Common myeloid progenitor, CD34-positive (primary cell): ENCODE measurements at regions of chr12 and their contacts with region 1.

Region 1: DNA sequence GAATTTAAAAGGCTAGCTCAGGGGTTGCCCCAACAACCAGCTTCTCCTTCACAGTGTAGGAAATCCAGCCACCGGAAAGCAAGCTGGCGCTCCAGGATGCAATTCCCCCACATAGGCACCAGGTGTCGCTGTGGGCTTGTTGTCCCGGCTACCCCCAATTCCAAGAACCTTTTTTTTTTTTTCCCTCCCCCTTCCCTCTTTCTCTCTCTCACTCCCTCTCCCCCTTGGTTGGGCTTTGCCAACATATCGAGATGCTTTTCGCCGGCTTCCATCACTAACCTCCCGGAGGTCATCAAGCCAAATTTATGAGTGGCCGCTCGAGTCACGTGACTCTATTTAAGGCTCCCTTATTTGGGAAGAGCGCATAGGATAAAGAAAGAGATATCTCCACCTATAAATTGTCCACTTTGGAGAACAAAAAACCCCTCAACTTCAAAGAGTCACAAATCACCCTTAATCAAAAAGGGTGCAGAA is at the start of gene HOXC5:
- DNase-seq: peak; percentile 68 to 84 (median 80)
- H3K4me3 ChIP-seq: peak within 1 kb of the TSS in 2 of 7 experiments; percentile 8 to 17
- H3K27ac ChIP-seq: no peak within 1 kb of the TSS
- H3K4me1 ChIP-seq: peaks cover 0 to 27% (median 12%) of the 10 kb centered on the region in 4 experiments
- H3K27me3 ChIP-seq: peaks cover 15 to 100% (median 71%) of the 10 kb centered on the region in 5 experiments

Region 2: DNA sequence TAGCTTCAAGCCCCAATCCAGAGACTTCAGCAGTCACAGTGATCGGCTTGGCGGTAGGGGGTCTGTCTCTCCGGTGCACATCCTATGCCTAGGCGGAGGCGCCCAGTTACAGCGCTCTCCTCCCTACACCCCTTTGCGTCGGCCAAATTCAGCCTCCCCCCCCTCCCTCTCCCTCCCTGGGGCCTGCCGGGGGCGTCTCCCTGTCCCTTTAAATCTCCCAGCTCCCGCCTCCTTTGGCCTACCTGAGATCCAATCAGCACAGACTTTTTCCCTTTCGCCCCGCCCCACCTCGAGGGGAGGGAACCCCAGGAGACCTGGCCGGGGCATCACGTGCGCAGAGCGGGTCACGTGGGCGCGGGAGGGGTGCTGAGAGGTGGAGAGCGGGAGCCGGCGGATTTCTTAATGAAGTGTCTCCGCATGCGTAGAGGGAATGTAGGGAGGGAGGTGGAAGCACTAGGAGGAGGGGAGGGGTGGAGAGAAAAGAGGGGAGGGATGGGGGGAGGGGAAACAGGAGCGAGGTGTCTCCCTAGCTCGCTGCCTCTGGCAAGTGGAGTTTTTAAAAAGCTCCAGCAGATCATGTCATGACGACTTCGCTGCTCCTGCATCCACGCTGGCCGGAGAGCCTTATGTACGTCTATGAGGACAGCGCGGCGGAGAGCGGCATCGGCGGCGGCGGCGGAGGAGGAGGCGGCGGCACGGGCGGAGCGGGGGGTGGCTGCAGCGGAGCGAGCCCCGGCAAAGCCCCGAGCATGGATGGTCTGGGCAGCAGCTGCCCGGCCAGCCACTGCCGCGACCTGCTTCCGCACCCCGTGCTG is 94.1 kb before region 1 on chr12 and contains the start of gene HOXC13:
- CTCF ChIA-PET with region 1: no interaction called
- POLR2A ChIA-PET with region 1: no interaction called
- DNase-seq: peak; percentile 43 to 65 (median 54)
- H3K4me3 ChIP-seq: no peak within 1 kb of the TSS
- H3K27ac ChIP-seq: no peak within 1 kb of the TSS
- H3K4me1 ChIP-seq: peaks cover 0 to 3% (median 0%) of the 10 kb centered on the region in 4 experiments
- H3K27me3 ChIP-seq: peaks cover 36 to 99% (median 74%) of the 10 kb centered on the region in 5 experiments

Region 3: DNA sequence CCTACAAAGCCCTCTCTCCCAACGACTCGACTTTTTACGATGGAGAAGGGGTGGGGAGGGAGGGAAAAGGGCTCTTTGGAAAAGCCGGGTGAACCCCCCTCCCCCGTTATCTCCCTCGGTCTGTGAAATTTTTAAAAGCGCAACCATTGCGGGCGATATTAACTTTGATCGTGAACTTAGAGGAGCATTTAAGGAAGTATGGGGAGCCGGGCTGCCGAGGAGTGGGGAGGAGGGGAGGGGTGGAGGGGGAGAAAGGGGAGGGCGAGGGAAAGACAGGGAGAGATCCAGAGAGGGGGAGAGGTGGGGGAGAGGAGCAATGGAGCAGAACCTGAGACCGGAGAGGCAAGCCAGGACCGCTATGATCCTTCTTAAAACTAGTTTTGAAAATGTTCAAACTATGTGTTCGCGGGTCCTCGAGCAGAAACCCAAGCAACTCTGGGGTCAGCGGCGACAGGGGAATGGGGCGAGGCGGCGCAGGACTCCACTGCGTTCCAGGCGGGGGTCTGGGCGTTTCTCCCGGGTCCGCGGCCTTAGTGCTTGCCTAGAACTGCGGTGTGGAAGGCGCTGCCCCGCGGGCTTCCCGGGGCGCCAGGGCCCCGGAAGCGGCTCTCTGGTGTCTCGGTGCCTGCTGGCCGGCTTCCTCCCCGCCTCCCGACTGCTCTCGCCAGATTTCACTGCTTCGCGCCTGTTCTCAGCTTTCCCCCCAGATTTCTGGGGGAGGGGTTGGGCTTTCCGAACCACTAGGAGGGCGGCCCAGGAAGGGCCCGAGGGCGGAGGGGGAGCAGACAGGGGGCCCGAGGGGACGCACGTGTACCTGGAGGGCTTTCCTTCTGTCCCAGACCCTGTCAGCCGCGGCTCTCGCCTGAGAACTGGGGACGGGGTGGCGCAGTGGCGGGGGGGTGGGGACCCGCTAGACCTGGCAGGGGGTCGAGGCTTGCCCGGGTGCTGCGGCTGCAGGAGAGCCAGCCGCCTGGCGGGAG is 58.3 kb before region 1 on chr12 and contains the start of gene HOTAIR:
- CTCF ChIA-PET with region 1: no interaction called
- POLR2A ChIA-PET with region 1: no interaction called
- DNase-seq: peak in 2 of 3 donors; percentile 54 to 61
- H3K4me3 ChIP-seq: peak within 1 kb of the TSS in 1 of 7 experiments; percentile 7
- H3K27ac ChIP-seq: no peak within 1 kb of the TSS
- H3K4me1 ChIP-seq: peaks cover 0 to 10% (median 4%) of the 10 kb centered on the region in 4 experiments
- H3K27me3 ChIP-seq: peaks cover 20 to 100% (median 75%) of the 10 kb centered on the region in 5 experiments

Region 4: GRCh38 chr12:54021432-54022013 is 11.1 kb before region 1 on chr12:
- CTCF ChIA-PET with region 1: interaction called, 15 read pairs
- POLR2A ChIA-PET with region 1: interaction called, 3 read pairs
- DNase-seq: no peak
- H3K4me3 ChIP-seq: no peak overlapping the region
- H3K27ac ChIP-seq: no peak overlapping the region
- H3K4me1 ChIP-seq: peaks cover 0 to 15% (median 9%) of the 10 kb centered on the region in 4 experiments
- H3K27me3 ChIP-seq: peaks cover 12 to 99% (median 48%) of the 10 kb centered on the region in 5 experiments

Region 5: DNA sequence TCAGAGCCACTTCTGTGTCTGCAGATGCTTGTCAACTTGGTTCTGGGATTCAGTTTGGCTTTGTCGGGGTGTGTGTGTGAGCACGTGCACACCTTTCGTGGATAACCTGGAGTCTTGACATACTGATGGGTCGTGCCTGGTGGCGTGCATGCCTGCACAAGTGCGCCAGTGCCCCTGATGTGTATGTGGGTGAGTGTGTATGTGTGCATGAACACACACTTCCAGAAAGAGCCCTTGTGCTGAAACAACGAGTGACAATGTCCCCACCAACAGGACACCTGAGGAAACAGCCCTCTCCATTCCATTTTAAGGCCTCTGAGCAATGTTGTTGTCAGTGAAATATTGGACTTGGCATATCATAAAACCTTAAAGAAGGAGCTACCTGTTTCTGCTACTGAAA is 102.2 kb after region 1 on chr12:
- CTCF ChIA-PET with region 1: interaction called, 10 read pairs
- POLR2A ChIA-PET with region 1: no interaction called
- DNase-seq: peak in 2 of 3 donors; percentile 25 to 27
- H3K4me3 ChIP-seq: no peak overlapping the region
- H3K27ac ChIP-seq: no peak overlapping the region
- H3K4me1 ChIP-seq: no peaks in the 10 kb centered on the region
- H3K27me3 ChIP-seq: peaks cover 7 to 99% (median 50%) of the 10 kb centered on the region in 5 experiments

Region 6: GRCh38 chr12:54191550-54192022 is 158.9 kb after region 1 on chr12:
- CTCF ChIA-PET with region 1: interaction called, 90 read pairs
- POLR2A ChIA-PET with region 1: no interaction called
- DNase-seq: peak; percentile 86 to 93 (median 86)
- H3K4me3 ChIP-seq: no peak overlapping the region
- H3K27ac ChIP-seq: no peak overlapping the region
- H3K4me1 ChIP-seq: peaks cover 4 to 17% (median 13%) of the 10 kb centered on the region in 4 experiments
- H3K27me3 ChIP-seq: peaks cover 14 to 67% (median 35%) of the 10 kb centered on the region in 5 experiments

Region 7: GRCh38 chr12:54201001-54201794 is 168.5 kb after region 1 on chr12:
- CTCF ChIA-PET with region 1: interaction called, 90 read pairs
- POLR2A ChIA-PET with region 1: interaction called, 3 read pairs
- DNase-seq: peak; percentile 70 to 77 (median 75)
- H3K4me3 ChIP-seq: no peak overlapping the region
- H3K27ac ChIP-seq: no peak overlapping the region
- H3K4me1 ChIP-seq: peaks cover 3 to 8% (median 6%) of the 10 kb centered on the region in 4 experiments
- H3K27me3 ChIP-seq: peaks cover 4 to 78% (median 37%) of the 10 kb centered on the region in 5 experiments

Region 8: DNA sequence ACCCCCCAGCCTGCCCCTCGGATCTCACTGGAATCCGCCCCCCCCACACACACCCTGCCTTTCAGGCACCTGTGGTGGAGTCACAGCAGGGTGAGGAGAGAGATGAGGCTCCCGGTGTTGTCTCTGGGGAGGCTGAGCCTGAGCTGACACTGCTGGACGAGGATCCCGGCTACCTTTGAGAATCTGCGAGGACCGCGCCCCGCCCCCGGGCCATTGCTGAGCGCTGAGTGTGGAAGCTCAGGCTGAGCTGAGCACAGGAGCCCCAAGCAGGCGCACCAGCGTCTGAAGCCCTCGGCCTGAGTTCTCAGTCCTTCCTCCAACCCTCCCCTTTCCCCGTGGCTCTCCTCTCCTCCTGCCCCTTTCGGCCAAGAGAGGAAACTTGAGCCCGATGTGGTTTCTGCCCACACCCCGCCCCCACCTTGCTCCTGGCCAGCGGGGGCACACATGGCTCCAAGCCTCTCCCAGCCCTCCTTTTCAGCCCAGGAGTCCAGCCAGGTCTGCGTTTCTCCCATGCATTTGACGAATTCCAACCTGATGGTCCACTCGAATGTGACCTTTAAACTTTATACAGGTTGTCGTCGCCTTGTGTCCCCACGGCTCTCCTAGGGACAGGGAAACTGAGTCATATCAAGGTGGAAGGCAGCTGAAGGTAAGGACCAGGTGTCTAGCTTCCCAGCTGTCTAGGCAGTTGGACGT is 268.2 kb after region 1 on chr12 and contains the start of gene NFE2:
- CTCF ChIA-PET with region 1: no interaction called
- POLR2A ChIA-PET with region 1: no interaction called
- DNase-seq: peak in 2 of 3 donors; percentile 65 to 75
- H3K4me3 ChIP-seq: peak within 1 kb of the TSS; percentile 67 to 100 (median 96)
- H3K27ac ChIP-seq: peak within 1 kb of the TSS; percentile 91 to 95
- H3K4me1 ChIP-seq: peaks cover 42 to 84% (median 74%) of the 10 kb centered on the region in 4 experiments
- H3K27me3 ChIP-seq: no peaks in the 10 kb centered on the region